MCF 10A (cell line): ENCODE measurements at regions of chr11 and their contacts with region 1.

Region 1: DNA sequence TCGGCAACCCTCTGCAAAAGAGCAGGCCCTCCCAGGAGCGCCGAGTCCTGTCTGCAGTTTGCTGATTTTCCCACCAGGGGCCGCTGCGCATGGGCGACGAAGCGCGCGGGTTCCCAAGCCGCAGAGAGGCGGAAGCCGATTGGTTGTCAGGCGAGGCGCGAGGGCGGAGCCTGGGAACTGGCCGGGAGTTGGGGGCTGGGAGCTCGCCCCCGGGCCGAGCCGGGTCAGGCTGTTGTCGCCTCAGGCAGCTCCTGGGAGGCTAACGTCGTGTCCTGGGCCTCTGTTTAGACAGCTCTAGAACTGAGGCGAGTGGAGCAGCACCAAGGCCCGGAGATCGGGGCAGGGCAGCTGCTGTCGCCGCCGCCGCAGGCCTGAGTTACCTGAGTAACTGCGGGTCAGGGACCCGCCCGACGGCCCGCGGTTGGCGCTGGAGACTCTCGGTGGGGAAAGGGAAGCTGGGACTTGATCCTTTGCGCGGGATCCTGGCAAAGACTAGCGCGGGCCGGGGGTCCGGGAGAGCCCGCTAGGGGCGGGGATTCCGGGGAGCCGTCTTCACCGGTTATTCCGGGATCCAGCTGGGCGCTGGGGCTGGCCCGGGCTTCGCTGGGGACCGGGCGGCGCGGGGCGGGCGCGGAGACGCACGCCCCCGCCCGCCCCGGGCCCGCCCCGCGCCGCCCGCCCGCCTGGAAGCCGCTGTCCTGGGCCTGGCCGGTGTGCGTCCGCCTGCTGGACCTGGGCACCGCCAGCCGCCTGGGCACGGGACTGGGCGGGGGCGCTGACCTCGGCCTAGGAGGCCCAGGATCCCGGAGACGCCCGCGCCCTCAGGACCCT is at the start of gene STIM1:
- DNase-seq: peak; percentile 94
- H3K4me3 Mint-ChIP-seq: peak within 1 kb of the TSS; percentile 99
- H3K27ac Mint-ChIP-seq: peak within 1 kb of the TSS; percentile 87
- H3K4me1 Mint-ChIP-seq: peaks cover 30% of the 10 kb centered on the region
- H3K27me3 Mint-ChIP-seq: no peaks in the 10 kb centered on the region
- CTCF ChIP-seq: peak; percentile 95
- total RNA-seq, gene STIM1: 41.2 and 56.2 TPM in 2 replicates

Region 2: DNA sequence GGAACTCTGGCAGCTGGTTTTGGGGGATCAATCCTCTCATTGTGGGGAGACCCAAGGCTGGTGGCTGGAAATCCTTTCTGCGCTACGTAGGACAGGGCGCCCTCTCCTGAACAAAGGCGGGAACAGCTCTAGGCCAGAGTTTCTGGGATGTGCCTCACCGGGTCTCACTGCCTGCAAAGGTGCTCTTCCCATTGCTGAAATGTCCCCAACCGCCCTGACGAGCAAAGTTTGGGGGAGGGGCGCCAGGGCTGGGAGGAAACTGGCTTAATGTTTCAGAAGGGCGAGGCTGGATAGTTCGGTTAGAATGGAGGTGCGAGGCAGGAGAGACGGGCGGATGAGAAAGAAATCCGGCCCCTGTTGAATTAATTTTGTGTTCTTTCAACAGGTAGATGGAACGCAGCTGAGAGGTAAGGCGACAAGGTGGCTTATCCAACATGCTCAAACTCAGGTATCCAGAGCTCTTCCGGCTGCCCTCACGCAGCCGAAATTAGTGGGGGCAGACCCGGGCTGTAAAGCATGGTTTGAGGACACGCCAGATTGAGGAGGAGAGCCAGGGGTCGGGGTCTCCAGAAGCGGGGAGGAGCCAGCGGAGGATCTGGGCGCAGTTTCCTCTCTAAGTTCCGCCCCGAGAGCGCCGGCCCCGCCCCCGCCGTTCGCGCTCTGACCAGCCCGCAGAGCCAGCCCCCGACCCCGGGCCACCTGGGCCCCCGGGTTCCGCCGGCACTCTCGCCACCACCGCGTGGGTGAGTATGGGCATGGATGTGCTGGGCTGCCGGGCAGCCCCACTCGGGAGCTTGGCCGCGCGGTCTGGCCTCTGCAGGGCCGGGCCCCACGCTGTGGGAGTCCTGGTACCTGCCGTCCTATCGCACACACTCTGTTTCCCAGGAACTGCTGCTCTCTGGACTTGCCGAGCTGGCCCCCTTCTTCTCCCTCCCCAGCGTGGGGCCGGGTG is 47.0 kb before region 1 on chr11 and contains the start of gene PGAP2:
- CTCF ChIA-PET with region 1: interaction called, 16 read pairs
- POLR2A ChIA-PET with region 1: interaction called, 3 read pairs
- intact Hi-C with region 1: no loop called
- DNase-seq: peak; percentile 77
- H3K4me3 Mint-ChIP-seq: peak within 1 kb of the TSS; percentile 81
- H3K27ac Mint-ChIP-seq: peak within 1 kb of the TSS; percentile 61
- H3K4me1 Mint-ChIP-seq: peaks cover 15% of the 10 kb centered on the region
- H3K27me3 Mint-ChIP-seq: no peaks in the 10 kb centered on the region
- CTCF ChIP-seq: peak; percentile 44
- total RNA-seq, gene PGAP2: 27.2 and 28.2 TPM in 2 replicates

Region 3: GRCh38 chr11:3867209-3868091 is 12.3 kb after region 1 on chr11:
- CTCF ChIA-PET with region 1: interaction called, 45 read pairs
- POLR2A ChIA-PET with region 1: interaction called, 11 read pairs
- intact Hi-C with region 1: no loop called
- DNase-seq: no peak
- H3K4me3 Mint-ChIP-seq: no peak overlapping the region
- H3K27ac Mint-ChIP-seq: no peak overlapping the region
- H3K4me1 Mint-ChIP-seq: peaks cover 15% of the 10 kb centered on the region
- H3K27me3 Mint-ChIP-seq: no peaks in the 10 kb centered on the region
- CTCF ChIP-seq: no peak

Region 4: GRCh38 chr11:3920148-3920852 is 65.1 kb after region 1 on chr11:
- CTCF ChIA-PET with region 1: interaction called, 7 read pairs
- POLR2A ChIA-PET with region 1: interaction called, 4 read pairs
- intact Hi-C with region 1: loop called (anchors 1 kb)
- DNase-seq: peak; percentile 89
- H3K4me3 Mint-ChIP-seq: peak overlapping the region; percentile 34
- H3K27ac Mint-ChIP-seq: peak overlapping the region; percentile 69
- H3K4me1 Mint-ChIP-seq: peaks cover 7% of the 10 kb centered on the region
- H3K27me3 Mint-ChIP-seq: no peaks in the 10 kb centered on the region
- CTCF ChIP-seq: no peak

Region 5: DNA sequence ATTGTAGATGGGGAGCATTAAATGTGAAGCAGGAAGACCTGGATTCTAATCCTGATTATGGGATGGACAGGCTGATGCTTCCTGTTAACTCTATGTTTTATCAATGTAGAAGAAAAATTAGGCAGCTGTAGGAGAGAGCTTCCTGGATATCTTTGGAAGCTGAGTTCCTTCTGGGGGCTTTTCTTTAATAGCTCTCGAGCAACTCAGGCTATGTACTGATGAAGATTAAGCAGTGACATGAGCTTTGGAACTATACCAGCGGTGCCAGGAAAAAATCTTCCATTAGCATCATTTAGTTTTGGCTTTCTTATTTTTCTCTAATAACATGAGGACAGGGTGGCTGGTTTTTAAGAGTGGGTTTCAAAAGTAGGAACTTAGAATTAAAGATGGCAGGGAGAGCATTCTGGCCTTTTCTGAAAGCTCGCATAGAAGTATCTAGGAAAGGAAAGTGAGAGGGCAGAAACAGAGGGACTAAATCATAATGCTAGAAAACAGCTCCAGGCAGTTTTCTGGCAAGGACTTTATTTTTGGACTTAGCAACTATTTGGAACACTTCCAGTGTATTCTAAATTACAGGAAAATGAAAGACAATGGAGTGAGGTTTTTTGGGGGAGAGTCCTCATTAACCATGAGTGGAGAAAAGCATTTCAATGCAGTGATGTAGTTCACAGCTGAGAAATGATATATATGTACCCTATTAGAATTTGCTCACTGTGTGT is 170.2 kb after region 1 on chr11:
- CTCF ChIA-PET with region 1: interaction called, 10 read pairs
- POLR2A ChIA-PET with region 1: no interaction called
- intact Hi-C with region 1: no loop called
- DNase-seq: peak; percentile 41
- H3K4me3 Mint-ChIP-seq: no peak overlapping the region
- H3K27ac Mint-ChIP-seq: peak overlapping the region; percentile 29
- H3K4me1 Mint-ChIP-seq: peaks cover 21% of the 10 kb centered on the region
- H3K27me3 Mint-ChIP-seq: no peaks in the 10 kb centered on the region
- CTCF ChIP-seq: no peak

Region 6: GRCh38 chr11:4060182-4060923 is 205.2 kb after region 1 on chr11:
- CTCF ChIA-PET with region 1: interaction called, 1,105 read pairs
- POLR2A ChIA-PET with region 1: interaction called, 9 read pairs
- intact Hi-C with region 1: no loop called
- DNase-seq: no peak
- H3K4me3 Mint-ChIP-seq: no peak overlapping the region
- H3K27ac Mint-ChIP-seq: no peak overlapping the region
- H3K4me1 Mint-ChIP-seq: no peaks in the 10 kb centered on the region
- H3K27me3 Mint-ChIP-seq: no peaks in the 10 kb centered on the region
- CTCF ChIP-seq: no peak